ENCODE measurements at regions of chrX and their contacts with region 1.

Region 1: GRCh38 chrX:102599084-102599950 is at the start of gene ARMCX5:
- DNase-seq: peak; percentile 44 to 74
- ATAC-seq: peak; percentile 94 to 99 (median 98)
- H3K4me3 ChIP-seq: peak within 1 kb of the TSS; percentile 35 to 72 (median 62)
- H3K27ac ChIP-seq: peak within 1 kb of the TSS in 9 of 10 donors; percentile 30 to 84 (median 75)
- H3K4me1 ChIP-seq: peaks cover 0 to 5% (median 0%) of the 10 kb centered on the region in 9 donors
- H3K27me3 ChIP-seq: peaks cover 0 to 8% (median 0%) of the 10 kb centered on the region in 7 donors
- CTCF ChIP-seq: no peak
- total RNA-seq, gene ARMCX5: 5.0 to 7.2 (median 6.0) TPM

Region 2: GRCh38 chrX:102652031-102652688 is 52.8 kb after region 1 on chrX:
- intact Hi-C with region 1: loop called in 3 of 10 experiments (anchors 5 to 10 kb)
- DNase-seq: peak in 1 of 2 donors; percentile 43
- ATAC-seq: peak; percentile 44 to 89 (median 69)
- H3K4me3 ChIP-seq: peak overlapping the region; percentile 24 to 79 (median 66)
- H3K27ac ChIP-seq: peak overlapping the region in 8 of 10 donors; percentile 9 to 78 (median 66)
- H3K4me1 ChIP-seq: peaks cover 0 to 6% (median 0%) of the 10 kb centered on the region in 9 donors
- H3K27me3 ChIP-seq: peaks cover 0 to 14% (median 0%) of the 10 kb centered on the region in 7 donors
- CTCF ChIP-seq: peak in 8 of 9 donors; percentile 26 to 64 (median 48)

Region 3: GRCh38 chrX:102659790-102660757 is 60.8 kb after region 1 on chrX:
- intact Hi-C with region 1: loop called in 1 of 10 experiments (anchors 10 kb)
- DNase-seq: peak; percentile 84 to 86
- ATAC-seq: peak; percentile 94 to 100 (median 99)
- H3K4me3 ChIP-seq: peak overlapping the region; percentile 15 to 62 (median 56)
- H3K27ac ChIP-seq: peak overlapping the region in 8 of 10 donors; percentile 35 to 74 (median 56)
- H3K4me1 ChIP-seq: peaks cover 0 to 10% (median 5%) of the 10 kb centered on the region in 9 donors
- H3K27me3 ChIP-seq: peaks cover 0 to 6% (median 0%) of the 10 kb centered on the region in 7 donors
- CTCF ChIP-seq: no peak